Dendritic cell treated with granulocyte-macrophage colony-stimulating factor and Interleukin-4, amounts not matched to agents 40 ng/mL and 50 ng/mL, for 4 days (primary cell): ENCODE measurements at regions of chr2 and their contacts with region 1.

Region 1: DNA sequence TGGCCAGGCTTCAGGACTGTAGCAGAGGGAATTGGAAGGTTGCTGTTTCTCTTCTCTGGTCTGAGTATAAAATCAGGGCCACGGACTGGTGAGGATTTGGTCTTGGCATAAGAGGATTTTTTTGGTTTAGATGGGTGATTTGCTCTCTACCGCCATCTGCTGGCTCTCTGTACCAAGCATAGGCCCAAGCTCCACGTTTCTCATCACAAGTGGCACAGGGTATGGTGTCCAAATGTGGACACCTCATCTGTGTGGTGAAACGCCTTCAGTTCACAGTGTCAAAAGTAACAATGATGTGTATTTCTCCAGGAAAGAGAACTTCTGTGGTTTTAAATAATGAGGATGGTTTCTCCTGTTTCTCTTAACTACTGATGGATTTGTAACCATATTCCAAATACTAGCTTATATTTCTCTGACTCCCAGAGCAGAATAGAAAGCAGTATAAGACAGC is 115.1 kb downstream of the EML6 start:
- H3K4me3 Mint-ChIP-seq: no peak overlapping the region
- H3K27ac Mint-ChIP-seq: no peak overlapping the region
- H3K4me1 Mint-ChIP-seq: no peaks in the 10 kb centered on the region
- H3K27me3 Mint-ChIP-seq: no peaks in the 10 kb centered on the region

Region 2: GRCh38 chr2:54522624-54523281 is 315.9 kb before region 1 on chr2:
- intact Hi-C with region 1: loop called (anchors 5 kb)
- H3K4me3 Mint-ChIP-seq: no peak overlapping the region
- H3K27ac Mint-ChIP-seq: no peak overlapping the region
- H3K4me1 Mint-ChIP-seq: peaks cover 17% of the 10 kb centered on the region
- H3K27me3 Mint-ChIP-seq: peaks cover 6% of the 10 kb centered on the region

Region 3: GRCh38 chr2:54665436-54665856 is 173.2 kb before region 1 on chr2:
- intact Hi-C with region 1: loop called (anchors 2 kb)
- H3K4me3 Mint-ChIP-seq: no peak overlapping the region
- H3K27ac Mint-ChIP-seq: no peak overlapping the region
- H3K4me1 Mint-ChIP-seq: peaks cover 29% of the 10 kb centered on the region
- H3K27me3 Mint-ChIP-seq: peaks cover 1% of the 10 kb centered on the region

Region 4: GRCh38 chr2:54879598-54880332 is 41.2 kb after region 1 on chr2:
- intact Hi-C with region 1: no loop called
- H3K4me3 Mint-ChIP-seq: no peak overlapping the region
- H3K27ac Mint-ChIP-seq: peak overlapping the region; percentile 84
- H3K4me1 Mint-ChIP-seq: peaks cover 6% of the 10 kb centered on the region
- H3K27me3 Mint-ChIP-seq: peaks cover 3% of the 10 kb centered on the region